ENCODE measurements at regions of chr18 and their contacts with region 1.

Region 1: DNA sequence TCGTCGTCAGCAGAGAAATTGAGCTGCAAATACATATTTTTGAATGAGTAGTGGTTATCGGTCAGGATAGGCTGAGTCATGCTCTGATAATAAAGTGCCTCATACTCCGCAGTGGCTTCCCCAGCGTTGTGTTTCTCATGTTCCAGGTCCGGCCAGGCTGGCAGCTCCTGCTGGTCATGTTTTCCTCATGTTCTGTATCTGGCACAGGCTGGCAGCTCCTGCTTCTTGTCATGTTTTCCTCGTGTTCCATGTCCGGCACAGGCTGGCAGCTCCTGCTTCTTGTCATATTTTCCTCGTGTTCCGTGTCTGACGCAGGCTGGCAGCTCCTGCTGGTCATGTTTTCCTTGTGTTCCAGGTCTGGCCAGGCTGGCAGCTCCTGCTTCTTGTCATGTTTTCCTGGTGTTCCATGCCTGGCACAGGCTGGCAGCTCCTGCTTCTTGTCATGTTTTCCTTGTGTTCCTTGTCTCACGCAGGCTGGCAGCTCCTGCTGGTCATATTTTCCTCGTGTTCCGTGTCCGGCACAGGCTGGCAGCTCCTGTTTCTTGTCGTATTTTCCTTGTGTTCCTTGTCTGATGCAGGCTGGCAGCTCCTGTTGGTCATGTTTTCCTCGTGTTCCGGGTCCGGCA is 148.9 kb downstream of the ATP9B start:
- DNase-seq: peak; percentile 79 to 87
- ATAC-seq: peak; percentile 83 to 88
- H3K4me3 ChIP-seq: peak overlapping the region; percentile 44 to 54 (median 46)
- H3K27ac ChIP-seq: peak overlapping the region; percentile 84 to 89 (median 88)
- H3K4me1 ChIP-seq: peaks cover 15 to 20% of the 10 kb centered on the region in 2 donors
- H3K27me3 ChIP-seq: no peaks in the 10 kb centered on the region
- CTCF ChIP-seq: no peak
- POLR2A ChIP-seq: no peak

Region 2: GRCh38 chr18:79100944-79101343 is 117.1 kb before region 1 on chr18:
- in situ Hi-C with region 1: no loop called
- intact Hi-C with region 1: loop called (anchors 5 kb)
- DNase-seq: peak; percentile 56 to 89
- ATAC-seq: peak; percentile 100
- H3K4me3 ChIP-seq: no peak overlapping the region
- H3K27ac ChIP-seq: peak overlapping the region; percentile 68 to 79 (median 74)
- H3K4me1 ChIP-seq: peaks cover 11 to 22% of the 10 kb centered on the region in 2 donors
- H3K27me3 ChIP-seq: no peaks in the 10 kb centered on the region
- CTCF ChIP-seq: peak in 1 of 5 experiments; percentile 20
- POLR2A ChIP-seq: no peak

Measured in gastrocnemius medialis (tissue), 4 donors.